ENCODE measurements at regions of chr1 and their contacts with region 1.

Region 1: GRCh38 chr1:172917972-172918371 is 132.8 kb downstream of the TNFSF18 start:
- DNase-seq: peak; percentile 63 to 97
- H3K4me3 ChIP-seq: peak overlapping the region; percentile 29
- H3K27ac ChIP-seq: peak overlapping the region; percentile 84
- H3K4me1 ChIP-seq: peaks cover 23% of the 10 kb centered on the region
- H3K27me3 ChIP-seq: no peaks in the 10 kb centered on the region
- CTCF ChIP-seq: no peak

Region 2: GRCh38 chr1:172837816-172838680 is 79.9 kb before region 1 on chr1:
- CTCF ChIA-PET with region 1: no interaction called
- POLR2A ChIA-PET with region 1: no interaction called
- intact Hi-C with region 1: no loop called
- DNase-seq: peak in 1 of 2 experiments; percentile 67
- H3K4me3 ChIP-seq: no peak overlapping the region
- H3K27ac ChIP-seq: no peak overlapping the region
- H3K4me1 ChIP-seq: peaks cover 10% of the 10 kb centered on the region
- H3K27me3 ChIP-seq: no peaks in the 10 kb centered on the region
- CTCF ChIP-seq: no peak

Region 3: GRCh38 chr1:172895050-172895460 is 22.9 kb before region 1 on chr1:
- CTCF ChIA-PET with region 1: no interaction called
- POLR2A ChIA-PET with region 1: no interaction called
- intact Hi-C with region 1: loop called (anchors 1 kb)
- DNase-seq: no peak
- H3K4me3 ChIP-seq: no peak overlapping the region
- H3K27ac ChIP-seq: peak overlapping the region; percentile 18; the same call in 1 of the 2 replicates
- H3K4me1 ChIP-seq: peaks cover 45% of the 10 kb centered on the region
- H3K27me3 ChIP-seq: no peaks in the 10 kb centered on the region
- CTCF ChIP-seq: no peak

Region 4: GRCh38 chr1:172935062-172935592 is 17.2 kb after region 1 on chr1:
- CTCF ChIA-PET with region 1: no interaction called
- POLR2A ChIA-PET with region 1: interaction called, 5 read pairs
- intact Hi-C with region 1: loop called (anchors 1 kb)
- DNase-seq: no peak
- H3K4me3 ChIP-seq: no peak overlapping the region
- H3K27ac ChIP-seq: peak overlapping the region; percentile 85; the same call in 1 of the 2 replicates
- H3K4me1 ChIP-seq: peaks cover 34% of the 10 kb centered on the region
- H3K27me3 ChIP-seq: no peaks in the 10 kb centered on the region
- CTCF ChIP-seq: no peak

Region 5: DNA sequence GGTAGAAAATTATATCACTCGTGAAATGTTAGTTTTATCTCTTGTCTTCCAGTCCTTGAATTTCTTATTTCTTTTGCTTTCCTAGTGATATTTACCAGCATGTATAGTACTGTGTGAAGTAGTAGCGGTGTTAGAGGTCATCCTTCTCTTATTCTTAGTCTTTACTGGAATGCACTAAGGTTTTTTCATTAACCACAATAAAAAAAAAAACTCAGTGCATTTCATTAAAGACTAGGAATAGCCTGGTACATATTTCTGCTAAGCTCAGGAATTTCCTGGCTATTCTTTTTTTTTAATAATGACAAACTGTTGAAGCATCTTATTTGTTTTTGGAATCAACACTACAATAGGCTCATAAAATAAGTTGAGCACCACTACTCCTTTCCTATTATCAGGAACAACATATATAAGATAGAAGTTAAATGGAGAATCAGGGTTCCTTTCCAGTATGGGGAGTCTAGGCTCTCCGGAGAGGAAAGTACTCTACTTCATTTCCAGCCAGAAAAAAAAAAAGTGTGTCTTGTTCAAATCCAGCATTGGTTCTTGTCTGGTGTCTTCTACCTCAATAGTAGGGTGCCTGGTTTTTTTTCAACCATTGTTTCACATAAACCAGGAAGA is 72.7 kb after region 1 on chr1:
- CTCF ChIA-PET with region 1: no interaction called
- POLR2A ChIA-PET with region 1: no interaction called
- intact Hi-C with region 1: loop called (anchors 5 kb)
- DNase-seq: no peak
- H3K4me3 ChIP-seq: no peak overlapping the region
- H3K27ac ChIP-seq: no peak overlapping the region
- H3K4me1 ChIP-seq: no peaks in the 10 kb centered on the region
- H3K27me3 ChIP-seq: no peaks in the 10 kb centered on the region
- CTCF ChIP-seq: no peak

Region 6: DNA sequence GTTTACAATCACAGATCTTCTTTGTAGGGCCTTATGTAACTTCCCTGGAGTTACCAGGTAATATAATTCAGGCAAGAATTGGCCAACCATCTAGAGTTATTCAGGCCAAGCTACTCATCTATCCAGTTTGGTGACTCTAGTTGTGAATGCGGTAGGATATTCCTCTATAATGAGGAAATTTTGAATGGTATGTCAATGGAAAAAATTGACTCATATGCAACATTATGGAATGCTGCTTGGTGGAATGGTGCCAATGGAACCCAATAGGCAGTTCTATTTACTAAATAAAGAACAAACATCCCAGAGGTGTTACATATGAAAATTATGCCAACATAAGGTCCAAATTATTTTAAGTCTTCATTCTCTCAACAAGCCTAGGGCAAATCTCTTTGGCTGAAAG is 138.4 kb after region 1 on chr1:
- CTCF ChIA-PET with region 1: no interaction called
- POLR2A ChIA-PET with region 1: no interaction called
- intact Hi-C with region 1: loop called (anchors 2 kb)
- DNase-seq: peak; percentile 56 to 94
- H3K4me3 ChIP-seq: no peak overlapping the region
- H3K27ac ChIP-seq: peak overlapping the region; percentile 64
- H3K4me1 ChIP-seq: peaks cover 39% of the 10 kb centered on the region
- H3K27me3 ChIP-seq: no peaks in the 10 kb centered on the region
- CTCF ChIP-seq: no peak

Region 7: GRCh38 chr1:173202430-173203145 is 284.6 kb after region 1 on chr1:
- CTCF ChIA-PET with region 1: no interaction called
- POLR2A ChIA-PET with region 1: no interaction called
- intact Hi-C with region 1: loop called (anchors 5 kb)
- DNase-seq: peak in 1 of 2 experiments; percentile 33
- H3K4me3 ChIP-seq: no peak overlapping the region
- H3K27ac ChIP-seq: no peak overlapping the region
- H3K4me1 ChIP-seq: no peaks in the 10 kb centered on the region
- H3K27me3 ChIP-seq: no peaks in the 10 kb centered on the region
- CTCF ChIP-seq: peak; percentile 78

Region 8: GRCh38 chr1:173269490-173270230 is 351.7 kb after region 1 on chr1:
- CTCF ChIA-PET with region 1: no interaction called
- POLR2A ChIA-PET with region 1: no interaction called
- intact Hi-C with region 1: loop called (anchors 1 kb)
- DNase-seq: peak; percentile 51 to 82
- H3K4me3 ChIP-seq: no peak overlapping the region
- H3K27ac ChIP-seq: peak overlapping the region; percentile 93
- H3K4me1 ChIP-seq: peaks cover 24% of the 10 kb centered on the region
- H3K27me3 ChIP-seq: no peaks in the 10 kb centered on the region
- CTCF ChIP-seq: no peak